IMR-90 (cell line): ENCODE measurements at regions of chr1 and their contacts with region 1.

Region 1: GRCh38 chr1:14190508-14190907 is 408.0 kb upstream of the KAZN start:
- DNase-seq: no peak
- ATAC-seq: no peak
- H3K4me3 ChIP-seq: no peak overlapping the region
- H3K27ac ChIP-seq: no peak overlapping the region
- H3K4me1 ChIP-seq: no peaks in the 10 kb centered on the region
- H3K27me3 ChIP-seq: no peaks in the 10 kb centered on the region
- CTCF ChIP-seq: no peak
- POLR2A ChIP-seq: no peak
- RAD21 ChIP-seq: no peak

Region 2: GRCh38 chr1:14156543-14156942 is 34.0 kb before region 1 on chr1:
- CTCF ChIA-PET with region 1: no interaction called
- POLR2A ChIA-PET with region 1: no interaction called
- dilution Hi-C with region 1: no loop called
- in situ Hi-C with region 1: no loop called
- intact Hi-C with region 1: loop called (anchors 1 kb)
- DNase-seq: no peak
- ATAC-seq: no peak
- H3K4me3 ChIP-seq: no peak overlapping the region
- H3K27ac ChIP-seq: no peak overlapping the region
- H3K4me1 ChIP-seq: no peaks in the 10 kb centered on the region
- H3K27me3 ChIP-seq: no peaks in the 10 kb centered on the region
- CTCF ChIP-seq: no peak
- POLR2A ChIP-seq: no peak
- RAD21 ChIP-seq: no peak